ENCODE measurements at regions of chr15 and their contacts with region 1.

Region 1: GRCh38 chr15:25933456-25934158 is 70.5 kb upstream of the ATP10A start:
- DNase-seq: peak; percentile 87
- ATAC-seq: peak; percentile 99
- H3K4me3 ChIP-seq: peak overlapping the region; percentile 32
- H3K27ac ChIP-seq: peak overlapping the region; percentile 24; the same call in 1 of the 2 replicates
- H3K4me1 ChIP-seq: peaks cover 3% of the 10 kb centered on the region; the same call in 1 of the 2 replicates
- H3K27me3 ChIP-seq: no peaks in the 10 kb centered on the region
- CTCF ChIP-seq: peak; percentile 94
- POLR2A ChIP-seq: peak; percentile 58; the same call in 1 of the 2 replicates
- RAD21 ChIP-seq: peak; percentile 97

Region 2: DNA sequence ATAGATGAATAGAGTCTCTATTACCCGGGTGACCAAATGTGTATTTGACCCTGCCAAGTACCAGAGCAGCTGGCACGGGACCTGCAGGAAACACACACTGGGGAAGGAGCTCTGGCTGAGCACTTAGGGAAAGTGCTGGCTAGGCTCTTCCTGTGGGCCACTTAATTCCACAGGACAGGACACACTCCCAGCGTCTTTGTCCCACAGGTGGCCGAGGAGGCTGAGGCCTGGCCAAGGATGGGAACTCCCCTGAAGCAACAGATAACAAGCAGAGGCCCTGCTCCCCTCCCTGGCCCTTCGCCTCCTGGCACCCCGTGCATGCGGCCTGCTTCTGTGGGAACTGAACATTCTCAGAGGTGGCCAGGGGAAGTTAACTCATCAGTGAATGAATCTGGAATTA is 251.3 kb before region 1 on chr15:
- CTCF ChIA-PET with region 1: no interaction called
- POLR2A ChIA-PET with region 1: no interaction called
- dilution Hi-C with region 1: no loop called
- in situ Hi-C with region 1: no loop called
- intact Hi-C with region 1: no loop called
- DNase-seq: no peak
- ATAC-seq: no peak
- H3K4me3 ChIP-seq: no peak overlapping the region
- H3K27ac ChIP-seq: no peak overlapping the region
- H3K4me1 ChIP-seq: peaks cover 3% of the 10 kb centered on the region
- H3K27me3 ChIP-seq: no peaks in the 10 kb centered on the region
- CTCF ChIP-seq: no peak
- POLR2A ChIP-seq: no peak
- RAD21 ChIP-seq: no peak

Region 3: DNA sequence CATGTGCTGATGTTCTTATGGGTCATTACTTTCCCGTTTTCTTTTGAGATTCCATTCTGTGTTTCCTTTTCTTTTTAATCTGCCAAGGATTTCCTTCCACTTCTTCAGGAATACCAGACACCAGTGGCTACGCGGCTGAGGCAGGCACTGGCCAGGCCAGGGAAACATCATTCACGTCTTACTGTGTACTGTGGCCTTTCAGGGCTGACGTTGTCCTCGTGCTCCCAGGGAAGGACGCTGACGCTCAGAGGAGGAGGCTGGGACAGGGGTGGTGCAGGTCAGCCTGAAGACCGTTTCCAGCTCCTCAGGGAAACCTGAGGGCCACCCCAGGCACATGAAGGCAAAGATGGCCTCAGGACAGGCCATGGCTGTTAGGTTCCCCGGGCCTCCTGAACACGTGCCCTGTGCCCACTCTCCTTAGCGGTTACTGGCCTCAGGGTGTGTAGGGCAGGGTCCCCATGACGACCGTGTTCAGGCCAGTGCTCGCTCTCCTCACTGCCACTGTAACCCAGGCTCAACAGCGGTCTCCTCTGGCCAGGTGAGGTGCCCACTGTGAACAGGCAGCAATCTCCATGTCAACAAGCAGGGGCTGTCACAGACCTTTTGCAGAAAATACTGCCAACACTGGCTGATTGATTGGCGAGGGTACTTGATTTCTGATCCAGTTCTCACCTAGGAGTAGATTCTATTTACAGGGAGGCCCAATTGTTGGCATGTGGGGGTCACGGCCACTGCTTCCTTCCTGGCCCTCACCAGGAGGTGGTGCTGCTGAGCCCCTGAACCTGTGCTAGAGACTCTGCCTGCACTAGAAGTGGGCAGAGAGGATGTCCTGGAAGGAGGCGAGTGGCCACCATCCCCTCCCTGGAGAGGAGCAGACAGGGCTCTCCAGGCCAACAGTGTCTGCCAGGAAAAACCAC is 240.0 kb before region 1 on chr15:
- CTCF ChIA-PET with region 1: interaction called, 6 read pairs
- POLR2A ChIA-PET with region 1: no interaction called
- dilution Hi-C with region 1: no loop called
- in situ Hi-C with region 1: loop called (anchors 10 kb)
- intact Hi-C with region 1: loop called (anchors 1 kb)
- DNase-seq: peak; percentile 24
- ATAC-seq: peak; percentile 90
- H3K4me3 ChIP-seq: no peak overlapping the region
- H3K27ac ChIP-seq: no peak overlapping the region
- H3K4me1 ChIP-seq: peaks cover 4% of the 10 kb centered on the region
- H3K27me3 ChIP-seq: no peaks in the 10 kb centered on the region
- CTCF ChIP-seq: peak; percentile 62
- POLR2A ChIP-seq: no peak
- RAD21 ChIP-seq: peak; percentile 70

Region 4: GRCh38 chr15:25739687-25740121 is 193.9 kb before region 1 on chr15:
- CTCF ChIA-PET with region 1: interaction called, 6 read pairs
- POLR2A ChIA-PET with region 1: no interaction called
- dilution Hi-C with region 1: no loop called
- in situ Hi-C with region 1: no loop called
- intact Hi-C with region 1: loop called (anchors 1 kb)
- DNase-seq: peak; percentile 64
- ATAC-seq: peak; percentile 72
- H3K4me3 ChIP-seq: no peak overlapping the region
- H3K27ac ChIP-seq: no peak overlapping the region
- H3K4me1 ChIP-seq: peaks cover 13% of the 10 kb centered on the region
- H3K27me3 ChIP-seq: no peaks in the 10 kb centered on the region
- CTCF ChIP-seq: peak; percentile 63
- POLR2A ChIP-seq: no peak
- RAD21 ChIP-seq: peak; percentile 70

Region 5: GRCh38 chr15:25783607-25784540 is 149.7 kb before region 1 on chr15:
- CTCF ChIA-PET with region 1: interaction called, 9 read pairs
- POLR2A ChIA-PET with region 1: interaction called, 16 read pairs
- dilution Hi-C with region 1: no loop called
- in situ Hi-C with region 1: no loop called
- intact Hi-C with region 1: no loop called
- DNase-seq: peak; percentile 38
- ATAC-seq: peak; percentile 60
- H3K4me3 ChIP-seq: no peak overlapping the region
- H3K27ac ChIP-seq: peak overlapping the region; percentile 73
- H3K4me1 ChIP-seq: peaks cover 38% of the 10 kb centered on the region
- H3K27me3 ChIP-seq: no peaks in the 10 kb centered on the region
- CTCF ChIP-seq: peak; percentile 42
- POLR2A ChIP-seq: no peak
- RAD21 ChIP-seq: peak; percentile 43; the same call in 1 of the 2 replicates

Region 6: GRCh38 chr15:25790000-25790660 is 143.5 kb before region 1 on chr15:
- CTCF ChIA-PET with region 1: interaction called, 5 read pairs
- POLR2A ChIA-PET with region 1: no interaction called
- dilution Hi-C with region 1: no loop called
- in situ Hi-C with region 1: no loop called
- intact Hi-C with region 1: loop called (anchors 2 kb)
- DNase-seq: peak; percentile 90
- ATAC-seq: peak; percentile 60
- H3K4me3 ChIP-seq: peak overlapping the region; percentile 4; the same call in 1 of the 2 replicates
- H3K27ac ChIP-seq: peak overlapping the region; percentile 17
- H3K4me1 ChIP-seq: peaks cover 28% of the 10 kb centered on the region
- H3K27me3 ChIP-seq: no peaks in the 10 kb centered on the region
- CTCF ChIP-seq: no peak
- POLR2A ChIP-seq: no peak; the same call in none of the 2 replicates
- RAD21 ChIP-seq: no peak; the same call in 1 of the 2 replicates

Region 7: DNA sequence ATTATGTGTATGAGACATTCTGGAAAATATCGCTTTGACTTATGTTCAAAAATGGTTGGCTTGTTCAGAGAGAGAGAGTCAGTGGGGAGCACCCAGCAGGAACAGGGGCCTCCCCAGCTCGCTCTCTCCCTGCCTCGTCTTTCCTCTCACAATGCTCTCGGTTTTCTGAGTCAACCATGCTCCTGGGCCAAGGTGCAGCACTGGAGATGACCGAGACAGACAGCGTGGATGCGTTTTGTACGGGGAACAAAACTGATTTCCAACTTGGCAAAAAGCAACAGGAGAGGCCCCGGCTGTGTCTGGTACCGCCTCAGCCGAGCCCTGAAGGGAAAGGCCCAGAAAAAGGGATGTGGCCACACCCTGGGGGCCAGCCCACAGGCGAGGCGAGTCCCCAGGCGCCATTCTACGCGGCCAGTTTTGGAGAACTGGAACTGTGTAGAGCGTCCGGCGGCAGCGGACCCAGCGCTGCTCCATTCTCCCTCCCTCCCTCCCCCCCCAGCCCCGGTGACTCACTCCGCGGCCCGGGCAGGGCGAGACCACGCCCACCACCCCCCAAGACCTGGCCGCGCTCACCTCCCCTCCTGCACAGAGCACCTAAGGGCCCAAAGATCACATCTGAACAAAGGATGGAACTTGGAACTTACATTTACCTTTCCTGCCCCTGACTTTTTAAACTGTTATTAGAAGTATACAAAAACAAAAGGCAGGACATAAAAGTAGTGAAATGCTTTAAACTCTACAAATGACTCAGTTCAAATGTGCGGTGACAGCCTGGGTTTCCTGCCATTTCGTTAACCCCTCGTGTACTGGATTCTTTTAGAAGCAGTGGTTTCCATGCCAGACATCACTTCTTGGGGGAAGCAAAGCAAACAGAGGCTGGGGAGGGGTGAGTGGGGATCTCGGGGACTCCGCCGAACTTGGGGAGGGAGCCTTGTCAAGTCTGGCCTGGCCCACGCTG is 83.2 kb before region 1 on chr15:
- CTCF ChIA-PET with region 1: interaction called, 11 read pairs
- POLR2A ChIA-PET with region 1: no interaction called
- dilution Hi-C with region 1: no loop called
- in situ Hi-C with region 1: no loop called
- intact Hi-C with region 1: no loop called
- DNase-seq: peak; percentile 70
- ATAC-seq: peak; percentile 90
- H3K4me3 ChIP-seq: peak overlapping the region; percentile 53
- H3K27ac ChIP-seq: peak overlapping the region; percentile 94
- H3K4me1 ChIP-seq: peaks cover 21% of the 10 kb centered on the region
- H3K27me3 ChIP-seq: no peaks in the 10 kb centered on the region
- CTCF ChIP-seq: no peak
- POLR2A ChIP-seq: peak; percentile 84
- RAD21 ChIP-seq: no peak

Region 8: DNA sequence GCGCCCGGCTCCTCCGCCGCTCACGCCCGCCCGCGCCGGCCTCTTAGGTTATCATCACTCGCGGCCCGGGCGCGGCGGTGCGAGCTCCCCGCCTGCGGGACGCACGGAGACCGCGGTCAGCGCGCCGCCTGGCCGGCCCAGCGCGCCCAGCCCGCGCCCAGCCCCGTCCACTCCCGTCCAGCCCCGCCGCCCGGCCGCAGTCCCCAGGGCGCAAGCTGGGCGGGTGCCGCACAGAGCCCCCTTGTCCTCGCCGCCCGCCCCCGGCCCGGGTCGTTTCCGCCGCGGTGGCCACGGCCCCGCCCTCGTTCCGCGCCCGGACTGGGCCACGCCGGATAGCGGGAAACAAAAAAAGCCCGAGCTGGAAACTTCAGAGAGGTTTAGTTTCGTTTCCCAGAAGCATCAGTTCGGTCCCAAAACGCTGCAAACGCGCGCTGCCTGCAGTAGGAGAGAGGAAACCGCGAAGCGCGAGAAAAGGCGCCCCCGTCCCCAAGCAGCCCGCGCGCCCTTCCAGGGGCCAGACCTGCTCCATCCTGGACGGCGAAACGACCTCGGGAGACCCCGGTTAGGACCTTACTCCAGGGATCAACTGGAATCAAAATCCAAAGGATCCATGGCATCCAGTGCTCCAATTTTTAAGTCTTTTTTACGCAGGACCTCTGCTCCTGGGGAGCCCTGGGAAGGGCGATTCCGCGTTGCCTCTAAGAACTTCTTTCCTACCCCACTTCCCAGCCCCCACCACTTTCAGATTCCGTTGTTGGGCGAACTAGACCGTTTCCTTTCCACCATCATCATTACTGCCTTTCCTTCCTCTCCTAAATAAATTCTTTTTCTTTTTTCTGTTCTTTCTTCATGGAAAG is 70.3 kb before region 1 on chr15 and contains the start of gene ATP10A:
- CTCF ChIA-PET with region 1: interaction called, 3 read pairs
- POLR2A ChIA-PET with region 1: no interaction called
- dilution Hi-C with region 1: no loop called
- in situ Hi-C with region 1: no loop called
- intact Hi-C with region 1: loop called (anchors 5 kb)
- DNase-seq: peak; percentile 71
- ATAC-seq: peak; percentile 63
- H3K4me3 ChIP-seq: peak within 1 kb of the TSS; percentile 84
- H3K27ac ChIP-seq: peak within 1 kb of the TSS; percentile 63
- H3K4me1 ChIP-seq: peaks cover 22% of the 10 kb centered on the region
- H3K27me3 ChIP-seq: no peaks in the 10 kb centered on the region
- CTCF ChIP-seq: no peak
- POLR2A ChIP-seq: no peak
- RAD21 ChIP-seq: peak; percentile 2; the same call in 1 of the 2 replicates
- total RNA-seq, gene ATP10A: 12.8 and 13.8 TPM in 2 replicates

Region 9: GRCh38 chr15:25903024-25903581 is 30.5 kb before region 1 on chr15:
- CTCF ChIA-PET with region 1: no interaction called
- POLR2A ChIA-PET with region 1: no interaction called
- dilution Hi-C with region 1: no loop called
- in situ Hi-C with region 1: no loop called
- intact Hi-C with region 1: no loop called
- DNase-seq: peak; percentile 41
- ATAC-seq: peak; percentile 65
- H3K4me3 ChIP-seq: no peak overlapping the region
- H3K27ac ChIP-seq: no peak overlapping the region
- H3K4me1 ChIP-seq: peaks cover 16% of the 10 kb centered on the region
- H3K27me3 ChIP-seq: no peaks in the 10 kb centered on the region
- CTCF ChIP-seq: no peak
- POLR2A ChIP-seq: no peak
- RAD21 ChIP-seq: no peak

Region 10: GRCh38 chr15:25990220-25990619 is 56.6 kb after region 1 on chr15:
- CTCF ChIA-PET with region 1: no interaction called
- POLR2A ChIA-PET with region 1: no interaction called
- dilution Hi-C with region 1: no loop called
- in situ Hi-C with region 1: no loop called
- intact Hi-C with region 1: no loop called
- DNase-seq: no peak
- ATAC-seq: no peak
- H3K4me3 ChIP-seq: no peak overlapping the region
- H3K27ac ChIP-seq: no peak overlapping the region
- H3K4me1 ChIP-seq: no peaks in the 10 kb centered on the region
- H3K27me3 ChIP-seq: no peaks in the 10 kb centered on the region
- CTCF ChIP-seq: no peak
- POLR2A ChIP-seq: no peak
- RAD21 ChIP-seq: no peak

Region 11: GRCh38 chr15:26531489-26531888 is 597.9 kb after region 1 on chr15:
- CTCF ChIA-PET with region 1: no interaction called
- POLR2A ChIA-PET with region 1: no interaction called
- dilution Hi-C with region 1: no loop called
- in situ Hi-C with region 1: no loop called
- intact Hi-C with region 1: no loop called
- DNase-seq: no peak
- ATAC-seq: no peak
- H3K4me3 ChIP-seq: no peak overlapping the region
- H3K27ac ChIP-seq: no peak overlapping the region
- H3K4me1 ChIP-seq: no peaks in the 10 kb centered on the region
- H3K27me3 ChIP-seq: no peaks in the 10 kb centered on the region
- CTCF ChIP-seq: no peak
- POLR2A ChIP-seq: no peak
- RAD21 ChIP-seq: no peak

Measured in IMR-90 (cell line).